Right cardiac atrium (tissue), 5 donors: ENCODE measurements at regions of chr6 and their contacts with region 1.

Region 1: DNA sequence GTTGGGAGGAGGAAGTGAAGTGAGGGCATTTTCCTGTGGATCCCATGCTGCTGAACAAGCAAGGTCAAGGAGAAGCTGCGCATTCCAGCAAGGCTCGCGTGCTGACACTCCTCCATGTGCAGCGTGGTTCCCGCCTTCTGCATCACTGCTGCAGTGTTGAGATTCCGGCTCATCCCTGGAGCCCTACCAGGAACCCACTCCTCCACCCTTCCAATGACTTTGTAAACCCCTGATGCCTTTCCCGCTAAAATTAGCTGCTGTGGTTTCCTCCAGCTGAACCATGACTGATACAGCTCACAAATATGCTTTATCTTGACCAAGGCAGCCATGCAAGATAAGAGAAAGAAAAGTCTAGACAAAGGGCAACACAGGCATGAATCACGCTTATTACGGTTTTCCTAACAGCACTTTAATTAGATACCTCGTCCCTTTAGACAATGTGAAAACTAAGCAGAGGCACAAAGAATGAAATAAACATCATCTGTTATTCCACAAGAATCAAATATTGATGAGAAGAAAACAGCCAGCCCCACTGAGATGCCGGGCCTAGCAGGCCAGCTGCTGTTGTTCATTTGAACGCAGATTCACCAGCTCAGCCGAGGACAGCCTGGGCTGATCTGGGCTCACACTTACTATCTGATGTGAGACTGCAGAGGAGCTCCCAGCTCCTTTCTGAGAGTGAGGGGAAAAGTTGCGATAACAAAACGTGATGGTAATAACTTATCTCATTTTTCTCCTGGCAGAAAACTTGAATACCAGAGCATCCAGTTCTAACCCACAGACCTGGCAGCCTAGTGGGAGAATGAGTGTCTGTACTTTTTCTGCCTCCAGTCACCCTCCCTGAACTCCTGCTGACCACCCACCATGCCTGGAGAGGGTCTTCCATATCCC is 14.2 kb upstream of the BNIP5 start:
- DNase-seq: peak in 2 of 3 donors; percentile 66 to 69
- ATAC-seq: peak; percentile 70 to 92
- H3K4me3 ChIP-seq: no peak overlapping the region
- H3K27ac ChIP-seq: peak overlapping the region; percentile 61
- H3K4me1 ChIP-seq: peaks cover 7% of the 10 kb centered on the region
- H3K27me3 ChIP-seq: no peaks in the 10 kb centered on the region

Region 2: GRCh38 chr6:36153972-36154723 is 196.8 kb before region 1 on chr6:
- intact Hi-C with region 1: no loop called
- DNase-seq: no peak
- ATAC-seq: no peak
- H3K4me3 ChIP-seq: no peak overlapping the region
- H3K27ac ChIP-seq: no peak overlapping the region
- H3K4me1 ChIP-seq: no peaks in the 10 kb centered on the region
- H3K27me3 ChIP-seq: no peaks in the 10 kb centered on the region

Region 3: GRCh38 chr6:36302227-36302976 is 48.5 kb before region 1 on chr6:
- intact Hi-C with region 1: loop called in 2 of 4 experiments (anchors 5 to 10 kb)
- DNase-seq: peak; percentile 79 to 93 (median 86)
- ATAC-seq: peak; percentile 84 to 86
- H3K4me3 ChIP-seq: no peak overlapping the region
- H3K27ac ChIP-seq: no peak overlapping the region
- H3K4me1 ChIP-seq: no peaks in the 10 kb centered on the region
- H3K27me3 ChIP-seq: no peaks in the 10 kb centered on the region